ENCODE measurements at regions of chr2 and their contacts with region 1.

Region 1: GRCh38 chr2:230068016-230068650 is 591 bp downstream of the SLC16A14 start:
- DNase-seq: peak; percentile 64
- ATAC-seq: peak; percentile 68
- H3K4me3 Mint-ChIP-seq: peak overlapping the region; percentile 79
- H3K27ac Mint-ChIP-seq: no peak overlapping the region
- H3K4me1 Mint-ChIP-seq: peaks cover 9% of the 10 kb centered on the region
- H3K27me3 Mint-ChIP-seq: peaks cover 44% of the 10 kb centered on the region
- CTCF ChIP-seq: no peak

Region 2: GRCh38 chr2:229852565-229852964 is 215.6 kb before region 1 on chr2:
- CTCF ChIA-PET with region 1: no interaction called
- POLR2A ChIA-PET with region 1: no interaction called
- DNase-seq: no peak
- ATAC-seq: no peak
- H3K4me3 Mint-ChIP-seq: no peak overlapping the region
- H3K27ac Mint-ChIP-seq: no peak overlapping the region
- H3K4me1 Mint-ChIP-seq: peaks cover 17% of the 10 kb centered on the region
- H3K27me3 Mint-ChIP-seq: no peaks in the 10 kb centered on the region
- CTCF ChIP-seq: no peak

Region 3: DNA sequence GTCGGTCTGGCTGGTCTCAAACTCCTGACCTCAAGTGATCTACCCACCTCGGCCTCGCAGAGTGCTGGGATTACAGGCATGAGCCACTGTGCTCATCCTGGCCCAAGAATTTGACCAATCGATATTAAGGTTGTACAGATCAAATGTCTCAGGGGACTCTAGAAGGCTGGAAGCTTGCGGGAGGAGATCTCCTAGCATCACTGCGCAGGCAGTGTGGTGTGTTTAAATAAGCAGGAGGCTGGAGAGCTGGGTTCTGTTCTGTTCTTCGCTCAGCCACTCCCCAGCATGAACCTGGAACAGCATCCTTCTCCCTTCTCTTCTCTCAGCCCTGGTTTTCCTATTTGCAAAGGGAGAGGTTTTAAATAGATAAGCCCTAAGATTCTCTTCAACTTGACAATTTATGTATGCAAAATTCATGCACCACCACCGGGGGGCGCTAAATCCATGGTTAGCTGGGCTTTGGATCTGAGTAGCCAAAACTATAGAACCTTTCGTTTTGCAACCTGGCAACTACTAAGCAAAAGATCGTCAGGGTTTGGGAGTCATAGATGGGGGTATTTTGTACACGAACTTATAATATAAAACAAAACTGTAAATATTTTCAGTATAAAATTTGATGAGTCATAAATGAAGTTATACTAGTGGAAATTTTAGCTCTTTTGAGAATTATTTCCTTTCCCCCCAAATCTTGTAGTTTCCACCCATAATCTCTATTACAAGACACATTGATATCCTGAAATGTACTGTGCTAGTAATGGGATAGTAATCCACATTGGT is 60.0 kb before region 1 on chr2:
- CTCF ChIA-PET with region 1: interaction called, 11 read pairs
- POLR2A ChIA-PET with region 1: no interaction called
- DNase-seq: peak; percentile 82
- ATAC-seq: peak; percentile 70
- H3K4me3 Mint-ChIP-seq: no peak overlapping the region
- H3K27ac Mint-ChIP-seq: no peak overlapping the region
- H3K4me1 Mint-ChIP-seq: peaks cover 6% of the 10 kb centered on the region; the same call in 1 of the 2 replicates
- H3K27me3 Mint-ChIP-seq: no peaks in the 10 kb centered on the region
- CTCF ChIP-seq: peak; percentile 81

Region 4: GRCh38 chr2:230023309-230023708 is 44.8 kb before region 1 on chr2:
- CTCF ChIA-PET with region 1: interaction called, 11 read pairs
- POLR2A ChIA-PET with region 1: no interaction called
- DNase-seq: no peak
- ATAC-seq: peak; percentile 64
- H3K4me3 Mint-ChIP-seq: no peak overlapping the region
- H3K27ac Mint-ChIP-seq: no peak overlapping the region
- H3K4me1 Mint-ChIP-seq: no peaks in the 10 kb centered on the region
- H3K27me3 Mint-ChIP-seq: no peaks in the 10 kb centered on the region
- CTCF ChIP-seq: no peak

Region 5: DNA sequence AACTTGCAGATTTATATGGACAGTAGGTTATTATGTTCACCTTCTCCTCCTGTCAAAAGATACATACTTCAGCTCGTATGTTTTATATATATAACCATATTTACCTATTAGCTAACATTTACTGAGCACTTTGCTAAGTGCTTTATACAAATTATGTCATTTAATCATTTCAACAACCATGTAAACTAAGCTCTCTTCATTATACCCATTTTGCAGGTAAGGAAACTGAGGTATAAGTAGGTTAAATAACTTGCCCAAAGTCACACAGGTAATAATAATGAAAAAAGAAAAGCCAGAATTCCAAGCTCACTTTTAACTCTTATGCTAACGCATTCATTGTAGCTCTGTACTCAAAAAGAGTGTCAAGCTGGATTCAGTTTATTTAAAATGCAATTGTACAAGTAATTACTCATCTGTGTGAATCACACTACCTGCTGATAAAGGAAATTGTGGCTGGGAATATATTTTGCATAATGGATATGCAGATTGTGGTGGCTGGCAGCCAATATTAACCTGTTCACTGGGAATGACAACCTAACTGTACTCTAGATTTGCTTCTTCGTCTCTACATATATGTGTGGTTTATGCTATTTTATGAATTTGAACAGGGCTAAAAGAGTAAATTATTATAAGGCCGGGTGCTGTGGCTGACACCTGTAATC is 20.0 kb before region 1 on chr2:
- CTCF ChIA-PET with region 1: interaction called, 10 read pairs
- POLR2A ChIA-PET with region 1: no interaction called
- DNase-seq: no peak
- ATAC-seq: no peak
- H3K4me3 Mint-ChIP-seq: no peak overlapping the region
- H3K27ac Mint-ChIP-seq: no peak overlapping the region
- H3K4me1 Mint-ChIP-seq: no peaks in the 10 kb centered on the region
- H3K27me3 Mint-ChIP-seq: no peaks in the 10 kb centered on the region
- CTCF ChIP-seq: no peak

Region 6: GRCh38 chr2:230053753-230054478 is 14.2 kb before region 1 on chr2:
- CTCF ChIA-PET with region 1: interaction called, 10 read pairs
- POLR2A ChIA-PET with region 1: no interaction called
- DNase-seq: no peak
- ATAC-seq: no peak
- H3K4me3 Mint-ChIP-seq: no peak overlapping the region
- H3K27ac Mint-ChIP-seq: no peak overlapping the region
- H3K4me1 Mint-ChIP-seq: no peaks in the 10 kb centered on the region
- H3K27me3 Mint-ChIP-seq: no peaks in the 10 kb centered on the region
- CTCF ChIP-seq: no peak

Region 7: GRCh38 chr2:230097841-230098240 is 29.7 kb after region 1 on chr2:
- CTCF ChIA-PET with region 1: no interaction called
- POLR2A ChIA-PET with region 1: no interaction called
- DNase-seq: no peak
- ATAC-seq: no peak
- H3K4me3 Mint-ChIP-seq: no peak overlapping the region
- H3K27ac Mint-ChIP-seq: no peak overlapping the region
- H3K4me1 Mint-ChIP-seq: no peaks in the 10 kb centered on the region
- H3K27me3 Mint-ChIP-seq: peaks cover 4% of the 10 kb centered on the region; the same call in 1 of the 2 replicates
- CTCF ChIP-seq: no peak

Region 8: GRCh38 chr2:230160112-230160660 is 92.1 kb after region 1 on chr2:
- CTCF ChIA-PET with region 1: interaction called, 88 read pairs
- POLR2A ChIA-PET with region 1: no interaction called
- DNase-seq: peak; percentile 55
- ATAC-seq: peak; percentile 79
- H3K4me3 Mint-ChIP-seq: no peak overlapping the region
- H3K27ac Mint-ChIP-seq: no peak overlapping the region
- H3K4me1 Mint-ChIP-seq: peaks cover 5% of the 10 kb centered on the region
- H3K27me3 Mint-ChIP-seq: no peaks in the 10 kb centered on the region; the same call in 1 of the 2 replicates
- CTCF ChIP-seq: peak; percentile 61

Measured in WTC11 (cell line).